Activated T-helper 1 cell treated with anti-CD3 and anti-CD28 coated beads, Interleukin-12 subunit alpha, Interleukin-12 subunit beta, Interleukin-2, Interleukin-4 antibody, amounts not matched to agents 30 ng/mL and 10 ng/mL and 1 ng/mL, durations not matched to agents 14 hours and 24 hours and 36 hours (primary cell): ENCODE measurements at regions of chr19 and their contacts with region 1.

Region 1: GRCh38 chr19:18192673-18193387 is at the start of gene MPV17L2:
- DNase-seq: peak; percentile 99
- H3K4me3 Mint-ChIP-seq: peak within 1 kb of the TSS; percentile 83
- H3K27ac Mint-ChIP-seq: peak within 1 kb of the TSS; percentile 90
- H3K4me1 Mint-ChIP-seq: peaks cover 20% of the 10 kb centered on the region
- H3K27me3 Mint-ChIP-seq: no peaks in the 10 kb centered on the region
- total RNA-seq, gene MPV17L2: 19.2 and 23.3 TPM in 2 replicates

Region 2: GRCh38 chr19:18117692-18118378 is 75.0 kb before region 1 on chr19:
- intact Hi-C with region 1: loop called (anchors 1 kb)
- DNase-seq: peak; percentile 95
- H3K4me3 Mint-ChIP-seq: peak overlapping the region; percentile 84
- H3K27ac Mint-ChIP-seq: peak overlapping the region; percentile 93
- H3K4me1 Mint-ChIP-seq: peaks cover 31% of the 10 kb centered on the region
- H3K27me3 Mint-ChIP-seq: no peaks in the 10 kb centered on the region

Region 3: DNA sequence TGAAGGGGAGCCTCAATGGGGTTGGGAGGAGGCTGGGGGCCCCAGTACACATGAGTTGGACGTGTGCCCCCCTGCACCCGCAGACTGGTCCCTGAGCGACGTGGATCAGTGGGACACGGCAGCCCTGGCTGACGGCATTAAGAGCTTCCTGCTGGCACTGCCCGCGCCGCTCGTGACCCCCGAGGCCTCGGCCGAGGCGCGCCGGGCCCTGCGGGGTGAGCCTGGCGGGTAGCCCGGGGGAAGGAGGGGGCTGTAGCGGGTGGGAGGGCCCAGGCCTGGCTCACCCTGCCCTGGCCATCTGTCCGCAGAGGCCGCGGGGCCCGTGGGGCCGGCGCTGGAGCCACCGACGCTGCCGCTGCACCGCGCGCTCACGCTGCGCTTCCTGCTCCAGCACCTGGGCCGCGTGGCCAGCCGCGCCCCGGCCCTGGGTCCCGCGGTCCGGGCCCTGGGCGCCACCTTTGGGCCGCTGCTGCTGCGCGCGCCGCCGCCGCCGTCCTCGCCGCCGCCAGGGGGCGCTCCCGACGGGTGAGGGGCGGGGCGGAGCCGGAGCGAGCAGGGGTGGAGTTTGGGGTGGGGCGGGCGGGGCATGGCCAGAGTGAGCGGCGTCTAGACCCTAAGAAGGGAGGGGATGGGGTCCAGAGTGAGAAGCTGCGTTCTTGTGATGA is 31.7 kb before region 1 on chr19:
- intact Hi-C with region 1: loop called (anchors 1 kb)
- DNase-seq: peak; percentile 80
- H3K4me3 Mint-ChIP-seq: peak overlapping the region; percentile 72
- H3K27ac Mint-ChIP-seq: no peak overlapping the region
- H3K4me1 Mint-ChIP-seq: peaks cover 5% of the 10 kb centered on the region
- H3K27me3 Mint-ChIP-seq: no peaks in the 10 kb centered on the region

Region 4: DNA sequence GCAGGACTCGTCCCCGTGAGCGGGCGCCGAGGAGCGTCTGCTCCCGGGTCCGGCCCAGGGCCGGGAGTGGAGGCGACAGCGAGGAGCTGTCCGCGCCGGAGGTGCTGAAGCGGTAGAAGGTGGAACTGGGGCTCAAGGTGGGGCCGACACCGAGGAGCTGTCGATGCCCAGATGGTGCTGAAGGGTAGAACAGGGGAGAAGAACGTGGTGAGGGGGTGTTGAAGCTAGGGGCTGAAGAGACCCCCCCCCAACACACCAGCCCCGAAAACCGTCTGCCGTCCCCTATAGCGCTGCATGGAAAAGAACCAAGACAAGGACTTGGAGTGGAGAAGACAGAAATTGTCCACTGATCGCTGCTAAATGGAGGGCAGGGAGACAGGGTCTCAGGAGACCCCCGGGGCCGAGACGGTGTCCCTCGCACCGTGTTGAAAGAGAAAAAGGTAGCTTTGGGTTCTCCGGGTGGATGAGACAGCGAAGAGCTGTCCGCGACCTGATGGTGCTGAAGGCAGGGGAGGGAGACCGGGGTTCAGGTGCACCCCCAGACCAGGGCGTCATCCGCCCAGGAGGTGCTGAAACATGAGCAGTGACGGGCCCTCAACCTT is 40.5 kb after region 1 on chr19:
- intact Hi-C with region 1: loop called (anchors 5 kb)
- DNase-seq: peak; percentile 48
- H3K4me3 Mint-ChIP-seq: no peak overlapping the region
- H3K27ac Mint-ChIP-seq: no peak overlapping the region
- H3K4me1 Mint-ChIP-seq: peaks cover 9% of the 10 kb centered on the region
- H3K27me3 Mint-ChIP-seq: peaks cover 44% of the 10 kb centered on the region

Region 5: GRCh38 chr19:18304458-18305310 is 111.9 kb after region 1 on chr19:
- intact Hi-C with region 1: loop called (anchors 1 kb)
- DNase-seq: peak; percentile 77
- H3K4me3 Mint-ChIP-seq: peak overlapping the region; percentile 92
- H3K27ac Mint-ChIP-seq: peak overlapping the region; percentile 98
- H3K4me1 Mint-ChIP-seq: peaks cover 40% of the 10 kb centered on the region
- H3K27me3 Mint-ChIP-seq: peaks cover 1% of the 10 kb centered on the region

Region 6: DNA sequence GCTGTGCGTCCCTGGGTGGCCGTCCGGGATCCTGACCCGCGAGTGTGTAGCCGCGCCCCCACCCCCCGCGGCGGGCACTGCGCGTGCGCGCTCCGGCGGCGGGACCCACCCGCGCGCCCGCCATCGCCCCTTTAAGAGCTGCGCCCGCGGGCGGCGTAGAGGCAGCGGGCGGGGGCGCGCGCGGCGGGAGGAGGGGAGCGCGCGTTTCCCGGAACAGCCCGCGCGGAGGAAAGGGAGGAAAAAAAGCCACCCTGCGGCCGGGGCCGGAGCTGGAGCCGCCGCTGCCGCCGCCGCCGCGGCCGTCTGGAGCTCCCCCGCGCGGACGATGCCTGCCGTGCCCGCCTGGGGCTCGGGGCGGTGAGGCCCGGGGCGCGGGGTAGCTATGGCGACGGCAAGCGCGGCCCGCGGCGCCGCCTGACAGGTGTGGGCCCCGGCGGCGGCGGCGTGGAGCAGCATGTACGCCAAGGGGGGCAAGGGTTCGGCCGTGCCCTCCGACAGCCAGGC is 226.4 kb after region 1 on chr19 and contains the start of gene SSBP4:
- intact Hi-C with region 1: loop called (anchors 5 kb)
- DNase-seq: peak; percentile 75
- H3K4me3 Mint-ChIP-seq: peak within 1 kb of the TSS; percentile 89
- H3K27ac Mint-ChIP-seq: peak within 1 kb of the TSS; percentile 82
- H3K4me1 Mint-ChIP-seq: peaks cover 78% of the 10 kb centered on the region
- H3K27me3 Mint-ChIP-seq: peaks cover 5% of the 10 kb centered on the region
- total RNA-seq, gene SSBP4: 135 and 141 TPM in 2 replicates